ENCODE measurements at regions of chr6 and their contacts with region 1.

Region 1: DNA sequence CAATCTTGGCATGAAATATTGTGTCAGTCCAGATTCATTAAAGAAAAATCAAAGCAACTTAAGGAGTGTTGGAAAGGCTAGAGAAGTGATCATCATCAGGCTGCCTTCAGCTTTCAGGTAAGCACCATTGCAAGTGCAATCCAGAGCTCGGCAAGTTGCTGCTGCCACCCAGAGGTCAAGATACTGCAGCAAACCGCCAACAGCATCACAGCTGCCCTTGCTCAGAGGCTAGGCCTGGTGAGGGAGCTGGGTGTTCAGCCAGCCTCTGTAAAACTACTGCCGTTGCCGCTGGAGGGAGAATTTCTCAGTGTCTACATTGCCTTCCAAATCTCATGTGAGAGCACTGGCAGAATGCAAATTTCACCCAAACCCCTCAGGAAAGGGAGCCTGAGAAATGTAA is 5.8 kb upstream of the SYNE1 start:
- ATAC-seq: peak; percentile 68 to 98 (median 90)
- H3K4me3 ChIP-seq: no peak overlapping the region
- H3K27ac ChIP-seq: no peak overlapping the region
- H3K4me1 ChIP-seq: no peaks in the 10 kb centered on the region

Region 2: GRCh38 chr6:152552616-152553209 is 90.3 kb before region 1 on chr6:
- in situ Hi-C with region 1: loop called in 1 of 9 experiments (anchors 10 kb)
- ATAC-seq: peak in 6 of 8 experiments; percentile 38 to 97 (median 81)
- H3K4me3 ChIP-seq: no peak overlapping the region
- H3K27ac ChIP-seq: no peak overlapping the region
- H3K4me1 ChIP-seq: no peaks in the 10 kb centered on the region

Measured in motor neuron (in vitro differentiated cells).